Prostate gland (tissue), 2 donors: ENCODE measurements at regions of chr10 and their contacts with region 1.

Region 1: DNA sequence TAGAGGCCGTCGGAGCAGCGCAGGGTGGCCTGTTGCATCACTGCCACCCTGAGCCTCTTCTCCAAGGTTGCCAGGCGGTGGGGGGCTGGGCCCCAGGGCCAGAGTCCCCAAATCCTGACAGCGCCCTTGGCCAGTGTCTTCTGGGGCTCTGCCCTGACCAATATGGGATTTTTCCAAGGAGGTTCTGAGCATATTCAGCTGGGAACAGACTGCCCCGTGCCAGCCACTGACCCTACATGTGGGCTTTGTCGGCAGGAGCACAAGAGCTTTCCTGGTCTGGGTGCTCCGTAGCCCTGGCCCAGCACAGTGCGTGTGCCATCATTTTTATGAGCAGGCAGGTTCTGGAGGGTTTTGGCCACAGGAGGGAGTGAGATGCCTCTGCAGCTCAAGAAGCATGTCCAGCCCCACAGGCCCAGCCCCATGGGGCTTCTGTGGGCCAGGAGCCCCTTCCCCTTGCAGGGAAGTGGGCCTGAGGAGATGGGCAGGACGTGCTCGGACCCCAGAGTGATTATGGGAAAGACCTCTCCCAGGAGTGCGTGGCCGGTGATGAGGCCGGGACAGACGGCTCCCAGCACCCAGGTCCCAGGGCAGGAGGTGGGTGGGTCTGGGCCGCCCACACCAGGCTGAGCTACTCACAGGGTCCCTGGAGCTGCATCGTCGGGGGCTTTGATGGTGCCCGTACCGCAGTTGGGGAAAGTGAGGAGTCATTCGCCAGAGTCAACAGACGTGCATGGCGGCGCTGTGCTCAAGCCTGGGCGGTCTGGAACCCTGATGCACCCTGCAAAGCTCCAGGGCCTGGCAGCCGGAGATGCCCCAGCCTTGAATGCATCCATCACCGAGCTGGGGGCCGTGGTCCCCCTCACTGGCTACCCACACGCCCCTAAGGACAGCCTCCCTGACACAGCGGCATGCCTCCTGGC is 66.6 kb downstream of the PWWP2B start:
- DNase-seq: no peak
- H3K4me3 ChIP-seq: no peak overlapping the region
- H3K27ac ChIP-seq: peak overlapping the region; percentile 76 to 87
- H3K4me1 ChIP-seq: peaks cover 5% of the 10 kb centered on the region
- H3K27me3 ChIP-seq: no peaks in the 10 kb centered on the region
- CTCF ChIP-seq: peak in 2 of 4 experiments; percentile 6 to 26
- POLR2A ChIP-seq: no peak

Region 2: GRCh38 chr10:132480301-132480711 is 16.7 kb after region 1 on chr10:
- intact Hi-C with region 1: loop called (anchors 2 kb)
- DNase-seq: no peak
- H3K4me3 ChIP-seq: no peak overlapping the region
- H3K27ac ChIP-seq: no peak overlapping the region
- H3K4me1 ChIP-seq: no peaks in the 10 kb centered on the region
- H3K27me3 ChIP-seq: no peaks in the 10 kb centered on the region
- CTCF ChIP-seq: no peak
- POLR2A ChIP-seq: no peak

Region 3: GRCh38 chr10:132516771-132517725 is 53.5 kb after region 1 on chr10:
- intact Hi-C with region 1: loop called (anchors 1 kb)
- DNase-seq: peak; percentile 63
- H3K4me3 ChIP-seq: no peak overlapping the region
- H3K27ac ChIP-seq: peak overlapping the region; percentile 51 to 78
- H3K4me1 ChIP-seq: peaks cover 10% of the 10 kb centered on the region
- H3K27me3 ChIP-seq: no peaks in the 10 kb centered on the region
- CTCF ChIP-seq: no peak
- POLR2A ChIP-seq: peak; percentile 21

Region 4: GRCh38 chr10:132536971-132537712 is 73.5 kb after region 1 on chr10:
- intact Hi-C with region 1: loop called (anchors 2 kb)
- DNase-seq: peak; percentile 100
- H3K4me3 ChIP-seq: peak overlapping the region; percentile 68 to 74
- H3K27ac ChIP-seq: peak overlapping the region; percentile 91 to 94
- H3K4me1 ChIP-seq: peaks cover 13% of the 10 kb centered on the region
- H3K27me3 ChIP-seq: no peaks in the 10 kb centered on the region
- CTCF ChIP-seq: peak; percentile 15 to 59 (median 36)
- POLR2A ChIP-seq: peak; percentile 78

Region 5: DNA sequence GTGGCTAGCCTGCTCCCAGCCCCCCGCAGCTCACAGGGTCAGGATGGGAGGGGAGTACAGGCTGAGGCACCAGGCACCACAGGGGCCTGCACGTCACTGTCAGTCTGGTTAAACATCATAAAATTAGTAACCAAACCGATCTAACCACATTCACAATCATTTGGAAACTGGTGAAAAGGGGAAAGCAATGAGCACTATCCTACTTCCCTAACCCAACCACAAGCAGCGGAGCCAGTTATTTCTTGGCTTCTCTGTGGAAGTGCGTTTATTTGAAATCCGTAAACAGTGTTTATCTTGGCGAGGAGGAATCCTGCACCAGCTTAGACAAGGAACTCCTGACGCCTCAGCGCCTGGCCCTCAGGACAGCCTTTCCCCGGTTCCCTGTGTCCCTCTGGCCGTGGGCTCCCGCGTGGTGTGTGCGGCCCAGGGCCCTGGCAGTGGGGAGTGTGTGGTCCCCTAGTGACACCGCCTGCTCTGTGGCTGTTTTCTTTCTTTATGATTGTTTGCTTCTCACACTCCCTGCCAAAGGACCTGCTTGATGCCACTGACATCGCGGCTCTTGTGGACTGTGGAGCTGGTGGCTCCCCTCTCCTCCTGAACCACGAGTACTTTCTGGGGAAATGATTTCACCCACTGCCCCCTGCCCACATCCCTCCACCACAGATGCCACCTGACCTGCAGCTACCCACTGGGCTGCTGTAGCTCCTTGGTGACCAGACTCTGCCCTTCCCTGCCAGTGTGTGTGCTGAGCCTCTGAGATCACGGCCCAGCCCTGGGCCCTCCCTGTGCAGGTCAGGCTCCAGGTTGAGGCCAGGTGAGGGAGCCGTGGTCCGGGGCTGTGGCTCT is 112.0 kb after region 1 on chr10:
- intact Hi-C with region 1: loop called (anchors 5 kb)
- DNase-seq: peak; percentile 92
- H3K4me3 ChIP-seq: peak overlapping the region in 1 of 2 donors; percentile 1
- H3K27ac ChIP-seq: peak overlapping the region; percentile 90 to 94
- H3K4me1 ChIP-seq: peaks cover 46% of the 10 kb centered on the region
- H3K27me3 ChIP-seq: no peaks in the 10 kb centered on the region
- CTCF ChIP-seq: no peak
- POLR2A ChIP-seq: no peak

Region 6: GRCh38 chr10:132637477-132638129 is 174.0 kb after region 1 on chr10:
- intact Hi-C with region 1: loop called (anchors 1 kb)
- DNase-seq: peak; percentile 39
- H3K4me3 ChIP-seq: no peak overlapping the region
- H3K27ac ChIP-seq: no peak overlapping the region
- H3K4me1 ChIP-seq: peaks cover 10% of the 10 kb centered on the region
- H3K27me3 ChIP-seq: no peaks in the 10 kb centered on the region
- CTCF ChIP-seq: peak; percentile 39 to 87 (median 78)
- POLR2A ChIP-seq: no peak

Region 7: GRCh38 chr10:132700156-132701098 is 236.8 kb after region 1 on chr10:
- intact Hi-C with region 1: no loop called
- DNase-seq: no peak
- H3K4me3 ChIP-seq: no peak overlapping the region
- H3K27ac ChIP-seq: peak overlapping the region; percentile 30 to 55
- H3K4me1 ChIP-seq: peaks cover 4% of the 10 kb centered on the region
- H3K27me3 ChIP-seq: no peaks in the 10 kb centered on the region
- CTCF ChIP-seq: no peak
- POLR2A ChIP-seq: no peak